A673 (cell line): ENCODE measurements at regions of chr9 and their contacts with region 1.

Region 1: GRCh38 chr9:33393581-33393980 is 8.8 kb downstream of the AQP7 start:
- DNase-seq: no peak
- H3K4me3 ChIP-seq: no peak overlapping the region
- H3K27ac ChIP-seq: no peak overlapping the region
- H3K4me1 ChIP-seq: no peaks in the 10 kb centered on the region
- H3K27me3 ChIP-seq: no peaks in the 10 kb centered on the region
- CTCF ChIP-seq: no peak

Region 2: GRCh38 chr9:33364127-33364526 is 29.5 kb before region 1 on chr9:
- CTCF ChIA-PET with region 1: interaction called, 17 read pairs
- POLR2A ChIA-PET with region 1: no interaction called
- intact Hi-C with region 1: no loop called
- DNase-seq: no peak
- H3K4me3 ChIP-seq: no peak overlapping the region
- H3K27ac ChIP-seq: no peak overlapping the region
- H3K4me1 ChIP-seq: no peaks in the 10 kb centered on the region
- H3K27me3 ChIP-seq: no peaks in the 10 kb centered on the region
- CTCF ChIP-seq: no peak